Naive thymus-derived CD4-positive, alpha-beta T cell (primary cell): ENCODE measurements at regions of chr2 and their contacts with region 1.

Region 1: GRCh38 chr2:112584134-112584890 is at the start of gene CHCHD5:
- DNase-seq: peak; percentile 72 to 95 (median 93)
- ATAC-seq: peak; percentile 94
- H3K4me3 ChIP-seq: peak within 1 kb of the TSS; percentile 76
- H3K4me3 Mint-ChIP-seq: peak within 1 kb of the TSS; percentile 91 to 98 (median 96)
- H3K27ac ChIP-seq: peak within 1 kb of the TSS; percentile 79
- H3K27ac Mint-ChIP-seq: peak within 1 kb of the TSS; percentile 93 to 99 (median 96)
- H3K4me1 ChIP-seq: peaks cover 11 to 15% of the 10 kb centered on the region in 2 donors
- H3K4me1 Mint-ChIP-seq: peaks cover 26 to 49% (median 38%) of the 10 kb centered on the region in 7 donors
- H3K27me3 ChIP-seq: no peaks in the 10 kb centered on the region
- H3K27me3 Mint-ChIP-seq: peaks cover 0 to 2% (median 0%) of the 10 kb centered on the region in 5 donors
- total RNA-seq, gene CHCHD5: 17.4 to 31.9 (median 21.1) TPM

Region 2: DNA sequence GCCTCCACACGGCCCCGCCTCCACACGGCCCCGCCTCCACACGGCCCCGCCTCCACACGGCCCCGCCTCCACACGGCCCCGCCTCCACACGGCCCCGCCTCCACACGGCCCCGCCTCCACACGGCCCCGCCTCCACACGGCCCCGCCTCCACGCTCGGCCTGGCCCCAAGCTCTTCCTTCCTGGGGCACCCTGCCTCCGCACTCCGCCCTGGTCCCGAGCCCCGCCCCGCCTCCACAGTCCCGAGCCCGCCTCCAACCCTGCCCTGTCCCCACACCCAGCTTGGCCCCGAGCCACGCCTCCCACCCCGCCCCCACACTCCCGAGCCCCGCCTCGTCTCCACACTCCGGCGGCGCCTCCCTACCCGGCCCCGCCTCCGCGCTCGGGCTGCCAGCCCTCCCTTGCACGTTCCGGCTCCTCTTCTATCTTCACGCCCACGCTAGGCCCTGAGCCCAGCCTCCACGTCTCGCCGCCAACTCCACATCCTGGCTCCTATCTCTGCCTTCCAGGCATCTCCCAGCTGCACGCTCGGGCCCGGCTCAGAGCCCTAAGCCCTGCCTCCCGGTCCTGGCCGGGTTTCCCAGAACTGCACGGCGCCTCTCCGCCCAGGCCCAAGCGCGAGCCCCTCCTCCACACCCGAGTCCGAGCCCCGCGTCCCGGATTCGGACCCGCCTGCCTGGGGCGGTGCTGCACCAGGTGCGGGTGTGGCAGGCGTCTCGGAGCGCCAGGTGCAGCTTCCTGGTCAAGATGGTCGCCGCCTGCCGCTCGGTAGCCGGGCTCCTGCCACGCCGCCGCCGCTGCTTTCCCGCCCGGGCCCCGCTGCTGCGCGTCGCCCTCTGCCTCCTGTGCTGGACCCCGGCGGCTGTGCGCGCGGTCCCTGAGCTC is 529.2 kb before region 1 on chr2 and contains the start of gene TMEM87B:
- CTCF ChIA-PET with region 1: no interaction called
- POLR2A ChIA-PET with region 1: interaction called, 4 read pairs
- intact Hi-C with region 1: loop called (anchors 1 kb)
- DNase-seq: peak; percentile 90 to 98 (median 96)
- ATAC-seq: peak; percentile 80
- H3K4me3 ChIP-seq: peak within 1 kb of the TSS; percentile 85
- H3K4me3 Mint-ChIP-seq: peak within 1 kb of the TSS; percentile 80 to 100 (median 95)
- H3K27ac ChIP-seq: peak within 1 kb of the TSS; percentile 82
- H3K27ac Mint-ChIP-seq: peak within 1 kb of the TSS; percentile 92 to 100 (median 98)
- H3K4me1 ChIP-seq: peaks cover 16 to 19% of the 10 kb centered on the region in 2 donors
- H3K4me1 Mint-ChIP-seq: peaks cover 33 to 48% (median 42%) of the 10 kb centered on the region in 7 donors
- H3K27me3 ChIP-seq: no peaks in the 10 kb centered on the region
- H3K27me3 Mint-ChIP-seq: peaks cover 0 to 2% (median 0%) of the 10 kb centered on the region in 5 donors
- total RNA-seq, gene TMEM87B: 14.0 to 26.9 (median 17.4) TPM

Region 3: DNA sequence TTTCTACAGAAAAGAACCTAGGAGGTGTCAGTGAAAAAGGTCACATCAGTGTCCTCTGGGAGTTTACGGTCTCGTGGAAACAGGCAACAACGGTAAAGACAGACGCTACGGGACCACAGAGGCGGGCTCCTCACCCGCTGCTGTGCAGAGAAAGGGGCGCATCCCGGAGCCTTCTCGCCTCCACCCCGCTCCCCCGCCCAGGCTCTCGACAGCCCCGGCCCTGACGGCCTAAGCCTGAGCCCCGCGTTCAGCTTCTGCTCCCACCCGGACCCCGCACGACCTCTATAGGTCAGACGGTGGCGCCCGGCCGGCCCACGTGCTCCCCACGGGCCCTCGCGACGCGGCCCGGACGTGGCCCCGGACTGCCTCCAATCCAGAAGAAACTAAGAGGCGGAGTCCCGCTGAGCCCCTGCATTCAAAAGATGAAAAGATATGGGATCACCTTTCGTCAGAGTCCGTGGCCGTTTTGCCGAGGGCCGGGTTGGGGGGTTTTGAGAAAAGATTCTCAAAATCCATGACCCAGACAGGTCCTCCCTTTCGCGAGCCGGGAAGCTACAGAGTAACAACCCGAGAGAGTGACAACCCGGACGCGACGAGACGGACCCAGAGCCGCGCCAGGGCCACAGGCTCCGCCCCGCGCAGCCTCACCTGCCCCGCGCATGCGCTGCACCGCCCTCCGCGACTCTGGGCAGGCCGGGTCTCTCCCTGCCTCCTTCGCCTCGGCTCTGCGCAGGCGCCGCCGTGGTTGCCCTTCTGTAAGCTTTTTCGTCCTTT is 329.7 kb before region 1 on chr2 and contains the start of gene ZC3H8:
- CTCF ChIA-PET with region 1: no interaction called
- POLR2A ChIA-PET with region 1: no interaction called
- intact Hi-C with region 1: loop called (anchors 2 kb)
- DNase-seq: peak; percentile 92 to 98 (median 97)
- ATAC-seq: peak; percentile 95
- H3K4me3 ChIP-seq: peak within 1 kb of the TSS; percentile 74
- H3K4me3 Mint-ChIP-seq: peak within 1 kb of the TSS in 9 of 10 donors; percentile 84 to 92 (median 90)
- H3K27ac ChIP-seq: peak within 1 kb of the TSS; percentile 90
- H3K27ac Mint-ChIP-seq: peak within 1 kb of the TSS; percentile 80 to 97 (median 94)
- H3K4me1 ChIP-seq: peaks cover 13 to 19% of the 10 kb centered on the region in 2 donors
- H3K4me1 Mint-ChIP-seq: peaks cover 5 to 32% (median 15%) of the 10 kb centered on the region in 7 donors
- H3K27me3 ChIP-seq: no peaks in the 10 kb centered on the region
- H3K27me3 Mint-ChIP-seq: peaks cover 0 to 3% (median 0%) of the 10 kb centered on the region in 5 donors
- total RNA-seq, gene ZC3H8: 8.8 to 23.6 (median 17.2) TPM

Region 4: GRCh38 chr2:112481050-112481527 is 103.2 kb before region 1 on chr2:
- CTCF ChIA-PET with region 1: interaction called, 6 read pairs
- POLR2A ChIA-PET with region 1: interaction called, 5 read pairs
- intact Hi-C with region 1: loop called (anchors 1 kb)
- DNase-seq: peak; percentile 66 to 84 (median 82)
- ATAC-seq: peak; percentile 85
- H3K4me3 ChIP-seq: peak overlapping the region; percentile 73
- H3K4me3 Mint-ChIP-seq: peak overlapping the region; percentile 88 to 99 (median 94)
- H3K27ac ChIP-seq: peak overlapping the region; percentile 69
- H3K27ac Mint-ChIP-seq: peak overlapping the region; percentile 81 to 96 (median 92)
- H3K4me1 ChIP-seq: peaks cover 14 to 16% of the 10 kb centered on the region in 2 donors
- H3K4me1 Mint-ChIP-seq: peaks cover 17 to 34% (median 20%) of the 10 kb centered on the region in 7 donors
- H3K27me3 ChIP-seq: no peaks in the 10 kb centered on the region
- H3K27me3 Mint-ChIP-seq: peaks cover 0 to 4% (median 0%) of the 10 kb centered on the region in 5 donors

Region 5: GRCh38 chr2:112618383-112618782 is 34.1 kb after region 1 on chr2:
- CTCF ChIA-PET with region 1: no interaction called
- POLR2A ChIA-PET with region 1: no interaction called
- intact Hi-C with region 1: no loop called
- DNase-seq: no peak
- ATAC-seq: no peak
- H3K4me3 ChIP-seq: no peak overlapping the region
- H3K4me3 Mint-ChIP-seq: no peak overlapping the region
- H3K27ac ChIP-seq: no peak overlapping the region
- H3K27ac Mint-ChIP-seq: no peak overlapping the region
- H3K4me1 ChIP-seq: no peaks in the 10 kb centered on the region
- H3K4me1 Mint-ChIP-seq: peaks cover 0 to 17% (median 0%) of the 10 kb centered on the region in 7 donors
- H3K27me3 ChIP-seq: no peaks in the 10 kb centered on the region
- H3K27me3 Mint-ChIP-seq: peaks cover 0 to 7% (median 0%) of the 10 kb centered on the region in 5 donors

Region 6: DNA sequence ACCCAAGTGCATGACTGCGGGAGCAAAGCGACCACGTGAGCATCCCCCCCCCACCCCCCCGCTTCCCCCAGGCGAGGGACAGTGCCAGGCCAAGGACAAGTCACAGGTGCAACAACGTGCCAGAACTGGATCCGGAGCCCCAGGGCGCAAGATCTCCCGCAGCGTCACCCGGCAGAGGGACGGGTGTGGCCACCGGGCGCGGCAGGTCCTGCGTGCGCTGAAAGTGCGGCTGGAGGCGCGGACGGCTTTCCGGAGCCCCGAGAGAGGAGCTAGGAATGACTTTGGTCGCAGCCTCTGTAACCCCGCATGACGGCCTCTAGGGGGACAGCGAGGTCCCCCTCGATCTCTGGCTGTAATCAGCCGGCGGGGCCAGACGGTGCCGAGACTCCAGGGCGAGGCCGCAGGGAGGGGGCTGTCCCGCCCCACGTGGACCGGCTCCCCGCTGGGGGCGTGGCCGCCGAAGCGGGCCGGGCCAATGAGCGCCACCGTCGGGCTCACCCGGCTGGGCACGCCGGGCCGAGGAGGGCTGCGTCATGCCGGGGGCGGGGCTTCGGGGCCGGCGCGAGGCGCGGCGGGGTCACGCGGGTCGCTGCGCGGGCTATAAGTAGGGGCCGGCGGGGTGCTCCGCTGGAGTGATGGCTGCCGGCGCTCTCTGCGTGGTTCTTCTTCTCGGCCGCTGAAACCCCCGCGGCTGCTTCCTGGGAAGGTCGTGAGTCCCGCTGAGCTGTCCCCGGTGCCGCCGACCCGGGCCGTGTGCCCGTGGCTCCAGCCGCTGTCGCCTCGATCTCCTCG is 61.2 kb after region 1 on chr2 and contains the start of gene SLC20A1:
- CTCF ChIA-PET with region 1: interaction called, 4 read pairs
- POLR2A ChIA-PET with region 1: interaction called, 8 read pairs
- intact Hi-C with region 1: loop called (anchors 1 kb)
- DNase-seq: peak; percentile 95 to 100 (median 99)
- ATAC-seq: peak; percentile 98
- H3K4me3 ChIP-seq: peak within 1 kb of the TSS; percentile 71
- H3K4me3 Mint-ChIP-seq: peak within 1 kb of the TSS; percentile 89 to 100 (median 93)
- H3K27ac ChIP-seq: peak within 1 kb of the TSS; percentile 94
- H3K27ac Mint-ChIP-seq: peak within 1 kb of the TSS; percentile 79 to 94 (median 91)
- H3K4me1 ChIP-seq: peaks cover 34 to 47% of the 10 kb centered on the region in 2 donors
- H3K4me1 Mint-ChIP-seq: peaks cover 37 to 74% (median 58%) of the 10 kb centered on the region in 7 donors
- H3K27me3 ChIP-seq: no peaks in the 10 kb centered on the region
- H3K27me3 Mint-ChIP-seq: no peaks in the 10 kb centered on the region
- total RNA-seq, gene SLC20A1: 94.4 to 164 (median 120) TPM

Region 7: GRCh38 chr2:112737542-112738232 is 153.4 kb after region 1 on chr2:
- CTCF ChIA-PET with region 1: no interaction called
- POLR2A ChIA-PET with region 1: no interaction called
- intact Hi-C with region 1: no loop called
- DNase-seq: no peak
- ATAC-seq: no peak
- H3K4me3 ChIP-seq: no peak overlapping the region
- H3K4me3 Mint-ChIP-seq: no peak overlapping the region
- H3K27ac ChIP-seq: no peak overlapping the region
- H3K27ac Mint-ChIP-seq: no peak overlapping the region
- H3K4me1 ChIP-seq: no peaks in the 10 kb centered on the region
- H3K4me1 Mint-ChIP-seq: no peaks in the 10 kb centered on the region
- H3K27me3 ChIP-seq: no peaks in the 10 kb centered on the region
- H3K27me3 Mint-ChIP-seq: no peaks in the 10 kb centered on the region

Region 8: DNA sequence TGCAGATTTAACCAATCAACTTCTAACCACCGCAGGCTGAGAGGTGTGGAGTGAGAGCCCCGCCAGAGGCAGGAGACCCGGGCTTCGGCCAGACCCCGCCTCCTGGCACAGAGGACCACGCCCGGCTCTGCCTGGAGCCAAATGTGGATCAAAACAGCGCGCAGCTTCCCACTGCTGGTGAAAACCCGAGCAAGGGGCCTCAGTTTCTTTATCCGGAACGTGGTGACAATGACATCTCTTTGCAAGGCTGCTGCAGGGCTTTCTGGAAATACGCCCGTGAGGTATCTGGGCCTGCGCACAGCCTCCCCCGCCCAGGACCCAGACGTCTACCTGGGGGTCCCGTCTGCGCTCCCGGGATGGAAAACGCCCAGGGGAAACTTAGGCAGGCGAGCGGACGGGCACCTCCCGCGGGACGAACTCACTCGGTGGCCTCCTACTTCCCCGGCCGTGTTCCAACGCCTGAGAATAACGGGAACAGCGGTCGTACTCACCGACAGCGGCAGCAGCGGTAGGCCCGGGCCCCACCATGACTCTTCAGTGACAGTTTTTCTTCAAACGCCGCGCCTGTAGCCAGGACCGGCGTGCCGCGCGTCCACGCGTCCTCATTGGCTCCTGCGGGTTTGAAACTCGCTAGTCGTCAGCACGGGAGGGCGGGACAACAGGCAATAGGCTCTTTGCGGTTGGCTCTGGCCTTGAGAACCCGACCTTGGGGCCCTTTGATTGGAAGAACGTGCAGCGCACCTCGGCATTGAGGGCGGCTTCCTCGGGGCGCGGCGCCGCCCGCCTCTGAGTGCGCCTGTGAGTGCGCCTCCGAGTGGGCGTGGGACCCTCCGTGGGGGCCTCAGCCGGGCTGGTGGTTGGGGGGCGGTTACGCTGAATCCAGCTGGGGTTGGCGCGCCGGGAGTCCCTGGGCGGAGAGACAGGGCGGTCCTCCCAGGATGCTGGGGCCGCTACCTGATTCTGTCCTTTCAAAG is 180.0 kb after region 1 on chr2 and contains the start of gene CKAP2L:
- CTCF ChIA-PET with region 1: no interaction called
- POLR2A ChIA-PET with region 1: no interaction called
- intact Hi-C with region 1: loop called in 1 of 2 experiments (anchors 1 kb)
- DNase-seq: peak; percentile 85 to 97 (median 94)
- ATAC-seq: peak; percentile 99
- H3K4me3 ChIP-seq: peak within 1 kb of the TSS; percentile 82
- H3K4me3 Mint-ChIP-seq: peak within 1 kb of the TSS; percentile 90 to 97 (median 92)
- H3K27ac ChIP-seq: peak within 1 kb of the TSS; percentile 65
- H3K27ac Mint-ChIP-seq: peak within 1 kb of the TSS; percentile 29 to 95 (median 71)
- H3K4me1 ChIP-seq: peaks cover 12 to 16% of the 10 kb centered on the region in 2 donors
- H3K4me1 Mint-ChIP-seq: peaks cover 15 to 61% (median 30%) of the 10 kb centered on the region in 7 donors
- H3K27me3 ChIP-seq: no peaks in the 10 kb centered on the region
- H3K27me3 Mint-ChIP-seq: no peaks in the 10 kb centered on the region
- total RNA-seq, gene CKAP2L: 0.69 to 36.2 (median 2.4) TPM in 3 of 5 experiments, not detected in the others